ENCODE measurements at regions of chr20 and their contacts with region 1.

Region 1: DNA sequence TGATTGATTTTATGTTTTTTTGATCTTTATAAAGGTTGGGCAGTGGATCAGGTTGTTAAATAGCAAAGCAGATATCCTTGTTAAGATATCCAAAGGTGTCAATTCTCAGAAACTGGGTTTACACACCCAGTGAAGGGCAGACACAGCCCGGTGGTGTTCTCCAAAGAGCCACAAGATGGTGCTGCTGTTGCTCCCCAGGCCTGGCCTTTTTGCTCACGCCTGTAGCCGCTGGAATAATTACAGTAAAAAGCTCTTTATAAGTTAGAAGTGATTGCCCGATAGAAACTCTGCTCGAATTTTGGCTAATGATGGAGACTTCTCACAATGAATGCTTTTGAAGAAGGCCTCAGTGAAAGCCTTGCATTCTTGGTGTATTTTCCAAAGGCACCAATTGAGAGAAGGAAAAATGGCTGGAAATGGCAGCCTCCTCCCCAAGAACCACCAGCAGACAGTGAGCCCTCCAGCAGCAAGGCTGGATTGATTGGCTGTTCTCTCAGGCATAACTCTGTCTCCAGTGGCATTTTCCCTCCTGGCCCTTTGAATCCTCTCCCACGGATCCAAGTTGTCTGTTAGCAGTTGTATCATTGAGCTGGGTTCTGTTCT is 120.5 kb upstream of the CHD6 start:
- DNase-seq: peak; percentile 44
- CTCF ChIP-seq: peak; percentile 90

Region 2: GRCh38 chr20:41258474-41258873 is 480.2 kb before region 1 on chr20:
- in situ Hi-C with region 1: no loop called
- DNase-seq: no peak
- CTCF ChIP-seq: no peak

Region 3: GRCh38 chr20:41978246-41978791 is 239.6 kb after region 1 on chr20:
- in situ Hi-C with region 1: no loop called
- DNase-seq: no peak
- CTCF ChIP-seq: no peak

Region 4: GRCh38 chr20:43187476-43188233 is 1449.0 kb after region 1 on chr20:
- in situ Hi-C with region 1: loop called (anchors 25 kb)
- DNase-seq: peak; percentile 89
- CTCF ChIP-seq: peak; percentile 91

Region 5: GRCh38 chr20:43408848-43409576 is 1670.3 kb after region 1 on chr20:
- in situ Hi-C with region 1: loop called (anchors 25 kb)
- DNase-seq: no peak
- CTCF ChIP-seq: peak; percentile 77

Measured in GM13977 (cell line).